ENCODE measurements at regions of chr3 and their contacts with region 1.

Region 1: GRCh38 chr3:176872771-176873209 is 324.5 kb downstream of the TBL1XR1 start:
- DNase-seq: no peak
- ATAC-seq: no peak

Region 2: DNA sequence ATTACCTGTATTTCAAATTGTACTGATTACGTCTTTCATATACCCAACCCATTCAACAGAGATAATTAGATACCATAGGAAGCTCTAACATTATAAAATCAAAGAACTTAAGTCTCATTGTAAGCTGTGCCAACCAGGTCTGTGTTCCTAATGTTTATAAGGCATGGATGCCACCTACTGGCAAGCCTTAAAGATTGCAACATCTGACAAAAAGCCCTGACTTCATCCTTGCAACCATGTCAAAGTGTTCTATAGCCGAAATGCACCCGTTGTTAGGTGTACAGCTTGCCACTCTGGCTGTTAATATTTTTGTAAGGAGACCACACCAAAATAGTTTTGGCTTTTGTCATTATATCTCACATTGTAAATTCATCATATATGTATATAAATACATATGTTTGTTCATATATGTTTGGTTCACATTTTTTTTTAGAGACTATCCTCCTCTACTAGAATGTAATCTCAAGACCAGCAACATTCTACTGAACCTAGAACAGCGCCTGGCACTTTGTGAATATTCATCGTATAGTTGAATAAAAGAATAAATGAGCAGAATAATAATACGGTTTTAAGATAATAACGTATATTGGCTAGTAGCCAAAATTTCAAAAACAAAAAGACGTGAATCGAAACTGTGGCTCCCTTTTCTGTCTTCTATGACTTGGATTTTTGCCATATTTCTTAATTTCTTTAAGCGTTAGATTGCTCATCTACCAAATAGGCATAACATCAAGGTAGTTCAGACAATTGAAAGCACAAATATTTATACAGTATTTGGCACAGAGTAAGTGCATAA is 66.4 kb after region 1 on chr3:
- intact Hi-C with region 1: loop called (anchors 1 kb)
- DNase-seq: no peak
- ATAC-seq: peak; percentile 78

Region 3: DNA sequence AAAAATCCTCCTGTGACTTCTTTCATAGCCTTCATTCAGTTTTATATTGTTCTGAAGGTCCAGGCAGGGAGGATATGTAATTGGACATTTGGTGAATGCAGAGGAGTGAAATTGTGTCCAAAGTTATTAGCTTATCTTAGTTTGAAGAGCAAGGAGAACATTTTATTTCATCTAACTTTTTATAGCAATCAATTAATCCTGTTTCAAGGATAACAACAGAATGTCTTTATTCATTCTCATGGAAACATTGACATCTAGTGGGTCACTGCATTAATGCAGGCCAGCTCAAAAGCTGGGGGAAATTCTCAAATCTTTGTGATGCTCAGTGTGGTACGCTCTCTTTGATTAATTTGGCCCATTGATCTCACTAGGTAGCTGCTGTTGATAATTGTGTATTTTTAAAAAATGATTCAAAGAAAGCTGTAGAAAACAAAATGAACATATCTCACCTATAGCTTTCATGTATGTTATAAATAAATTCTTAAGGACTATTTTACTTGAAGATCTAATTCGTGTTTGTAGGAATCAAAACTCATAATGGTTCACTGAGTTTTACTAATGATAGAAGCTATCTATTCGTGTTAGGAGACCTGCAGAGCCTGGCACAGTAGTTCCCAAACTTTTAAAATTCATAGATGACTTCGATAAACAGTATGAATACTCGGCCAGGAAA is 1512.6 kb after region 1 on chr3:
- intact Hi-C with region 1: loop called (anchors 5 kb)
- DNase-seq: no peak
- ATAC-seq: peak; percentile 86

Measured in Right ventricle myocardium inferior (tissue), 1 donor.